HCT116 (cell line): ENCODE measurements at regions of chr17 and their contacts with region 1.

Region 1: DNA sequence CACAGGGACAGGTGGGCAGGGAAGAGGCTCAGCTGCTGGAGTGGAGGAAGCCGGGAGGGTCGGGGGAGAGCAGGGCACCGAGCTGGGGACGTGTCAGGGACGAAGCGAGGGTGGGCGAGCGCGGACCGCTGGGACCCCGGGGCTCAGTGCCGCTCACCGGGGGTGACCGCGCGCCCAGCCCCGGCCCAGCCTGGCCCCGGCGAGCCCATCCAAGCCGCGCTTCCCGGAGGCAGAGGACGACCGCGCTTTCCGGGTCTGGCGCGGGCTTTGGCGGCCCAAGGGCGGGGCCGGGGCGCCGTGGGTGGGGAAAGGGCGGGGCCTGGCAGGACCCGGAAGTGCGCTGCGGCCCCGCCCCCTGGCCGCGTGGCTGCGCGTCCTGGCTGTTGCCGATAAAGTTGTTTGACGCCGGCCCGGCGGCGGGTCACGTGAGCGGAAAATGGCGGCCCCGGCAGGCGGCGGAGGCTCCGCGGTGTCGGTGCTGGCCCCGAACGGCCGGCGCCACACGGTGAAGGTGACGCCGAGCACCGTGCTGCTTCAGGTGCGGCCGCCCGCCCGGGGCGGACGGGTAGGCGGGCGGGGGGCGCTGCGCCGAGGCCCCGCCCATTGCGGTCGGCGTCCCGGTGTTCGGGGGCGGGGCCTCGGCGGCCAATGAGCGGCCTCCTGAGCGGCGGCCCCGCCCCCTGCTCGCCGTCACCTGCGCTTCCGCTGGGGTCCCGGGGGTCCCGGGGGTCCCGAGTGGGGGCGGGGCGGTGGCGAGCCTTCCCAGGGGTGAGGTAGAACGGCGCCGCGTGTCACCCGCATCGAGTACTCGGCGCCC is at the start of gene ASPSCR1:
- DNase-seq: peak; percentile 86
- ATAC-seq: peak; percentile 88
- H3K4me3 ChIP-seq: peak within 1 kb of the TSS; percentile 78 to 92
- H3K27ac ChIP-seq: peak within 1 kb of the TSS; percentile 94
- H3K4me1 ChIP-seq: peaks cover 12 to 41% of the 10 kb centered on the region in 2 experiments
- H3K27me3 ChIP-seq: no peaks in the 10 kb centered on the region
- CTCF ChIP-seq: no peak
- POLR2A ChIP-seq: peak; percentile 88
- RAD21 ChIP-seq: no peak
- total RNA-seq, gene ASPSCR1: 51.0 TPM

Region 2: GRCh38 chr17:82003411-82004381 is 26.3 kb after region 1 on chr17:
- CTCF ChIA-PET with region 1: no interaction called
- POLR2A ChIA-PET with region 1: no interaction called
- RAD21 ChIA-PET with region 1: interaction called in 1 of 2 experiments, 3 read pairs
- intact Hi-C with region 1: loop called (anchors 2 kb)
- DNase-seq: peak; percentile 84
- ATAC-seq: peak; percentile 86
- H3K4me3 ChIP-seq: peak overlapping the region in 1 of 2 experiments; percentile 27; a peak in 2 of 4 replicates
- H3K27ac ChIP-seq: peak overlapping the region; percentile 86
- H3K4me1 ChIP-seq: peaks cover 44 to 60% of the 10 kb centered on the region in 2 experiments
- H3K27me3 ChIP-seq: no peaks in the 10 kb centered on the region
- CTCF ChIP-seq: peak in 2 of 3 experiments; percentile 18 to 20; a peak in 1 of 6 replicates
- POLR2A ChIP-seq: no peak
- RAD21 ChIP-seq: no peak